ENCODE measurements at regions of chr18 and their contacts with region 1.

Region 1: GRCh38 chr18:57004366-57005121 is 142.3 kb upstream of the BOD1L2 start:
- DNase-seq: no peak
- H3K4me3 Mint-ChIP-seq: no peak overlapping the region
- H3K27ac Mint-ChIP-seq: no peak overlapping the region
- H3K4me1 Mint-ChIP-seq: peaks cover 23% of the 10 kb centered on the region
- H3K27me3 Mint-ChIP-seq: no peaks in the 10 kb centered on the region

Region 2: DNA sequence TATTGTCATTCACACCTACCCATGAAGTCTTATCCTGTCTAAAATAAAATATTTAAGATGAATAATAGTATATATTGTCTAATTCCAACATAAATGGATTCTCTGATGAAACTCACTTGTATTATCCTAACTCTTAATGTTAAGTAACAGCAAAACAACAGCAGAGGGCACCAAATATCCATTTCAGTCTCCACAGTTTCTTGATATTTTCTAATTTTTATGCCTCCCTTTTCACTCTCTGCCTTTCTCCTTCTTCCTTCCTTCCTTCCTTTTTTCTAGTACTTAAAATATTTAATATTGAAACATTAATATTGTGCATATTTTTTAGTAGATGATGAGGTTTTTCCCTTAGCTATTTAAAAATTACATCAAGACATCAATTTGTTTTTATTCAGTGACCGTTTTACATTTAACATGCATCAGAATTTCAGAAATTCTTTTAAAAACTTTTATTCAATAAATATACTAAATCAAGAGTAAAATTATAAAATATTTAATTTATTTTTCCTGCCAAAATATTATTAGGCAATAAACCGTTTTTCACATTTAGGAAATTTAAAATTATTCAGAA is 255.8 kb before region 1 on chr18:
- CTCF ChIA-PET with region 1: no interaction called
- intact Hi-C with region 1: loop called (anchors 1 kb)
- DNase-seq: peak; percentile 10
- H3K4me3 Mint-ChIP-seq: no peak overlapping the region
- H3K27ac Mint-ChIP-seq: no peak overlapping the region
- H3K4me1 Mint-ChIP-seq: peaks cover 16% of the 10 kb centered on the region
- H3K27me3 Mint-ChIP-seq: no peaks in the 10 kb centered on the region

Region 3: DNA sequence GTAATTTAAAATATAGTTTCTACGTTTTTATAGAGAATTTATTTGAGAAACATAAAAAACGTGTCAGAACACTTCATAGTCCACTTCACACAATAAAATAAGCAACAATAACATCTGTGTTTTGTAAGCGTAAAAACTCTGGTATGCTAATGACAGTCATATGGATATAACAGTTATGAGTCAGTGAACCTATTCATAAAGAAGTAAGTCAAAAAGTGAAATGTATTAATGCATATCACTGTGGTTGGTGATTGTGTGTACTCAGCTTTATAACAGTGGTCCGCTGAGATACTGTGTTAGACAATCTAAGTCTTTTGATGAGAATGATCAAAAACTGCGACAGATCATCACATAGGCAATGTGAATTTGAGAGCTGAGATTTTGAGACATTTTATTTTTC is 200.1 kb before region 1 on chr18:
- CTCF ChIA-PET with region 1: no interaction called
- intact Hi-C with region 1: loop called (anchors 10 kb)
- DNase-seq: no peak
- H3K4me3 Mint-ChIP-seq: no peak overlapping the region
- H3K27ac Mint-ChIP-seq: no peak overlapping the region
- H3K4me1 Mint-ChIP-seq: no peaks in the 10 kb centered on the region
- H3K27me3 Mint-ChIP-seq: no peaks in the 10 kb centered on the region

Region 4: GRCh38 chr18:56992777-56993176 is 11.8 kb before region 1 on chr18:
- CTCF ChIA-PET with region 1: no interaction called
- intact Hi-C with region 1: loop called (anchors 1 kb)
- DNase-seq: no peak
- H3K4me3 Mint-ChIP-seq: no peak overlapping the region
- H3K27ac Mint-ChIP-seq: no peak overlapping the region
- H3K4me1 Mint-ChIP-seq: peaks cover 4% of the 10 kb centered on the region
- H3K27me3 Mint-ChIP-seq: no peaks in the 10 kb centered on the region

Region 5: DNA sequence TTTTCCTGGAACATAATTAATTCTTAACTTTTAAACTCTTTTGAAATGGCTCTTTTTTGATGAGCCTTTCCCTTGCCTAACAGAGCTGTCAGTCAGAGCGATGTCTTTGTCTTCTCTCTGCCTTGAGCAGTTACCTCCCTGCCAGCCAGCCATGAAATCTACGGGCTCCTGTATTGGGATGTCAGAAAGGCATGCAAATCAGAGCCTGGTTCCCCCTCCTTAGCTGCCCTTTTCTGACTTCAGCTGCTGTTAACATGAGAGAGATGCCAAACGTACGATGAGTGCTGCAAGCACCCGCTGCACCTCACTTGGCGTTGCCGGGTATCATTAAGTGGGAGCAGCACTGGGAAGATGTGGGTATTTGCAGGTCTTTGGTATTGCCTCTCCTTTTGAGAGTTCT is 10.9 kb after region 1 on chr18:
- CTCF ChIA-PET with region 1: no interaction called
- intact Hi-C with region 1: loop called (anchors 1 kb)
- DNase-seq: no peak
- H3K4me3 Mint-ChIP-seq: no peak overlapping the region
- H3K27ac Mint-ChIP-seq: no peak overlapping the region
- H3K4me1 Mint-ChIP-seq: peaks cover 23% of the 10 kb centered on the region
- H3K27me3 Mint-ChIP-seq: no peaks in the 10 kb centered on the region

Region 6: GRCh38 chr18:57175550-57175949 is 171.0 kb after region 1 on chr18:
- CTCF ChIA-PET with region 1: no interaction called
- intact Hi-C with region 1: no loop called
- DNase-seq: no peak
- H3K4me3 Mint-ChIP-seq: no peak overlapping the region
- H3K27ac Mint-ChIP-seq: no peak overlapping the region
- H3K4me1 Mint-ChIP-seq: no peaks in the 10 kb centered on the region
- H3K27me3 Mint-ChIP-seq: peaks cover 3% of the 10 kb centered on the region

Region 7: GRCh38 chr18:58768293-58768974 is 1763.9 kb after region 1 on chr18:
- CTCF ChIA-PET with region 1: no interaction called
- intact Hi-C with region 1: no loop called
- DNase-seq: peak; percentile 84
- H3K4me3 Mint-ChIP-seq: peak overlapping the region; percentile 15
- H3K27ac Mint-ChIP-seq: no peak overlapping the region
- H3K4me1 Mint-ChIP-seq: peaks cover 6% of the 10 kb centered on the region
- H3K27me3 Mint-ChIP-seq: peaks cover 36% of the 10 kb centered on the region

Measured in activated naive CD4-positive, alpha-beta T cell treated with anti-CD3 and anti-CD28 coated beads for 36 hours (primary cell).